K562 (cell line): ENCODE measurements at regions of chr20 and their contacts with region 1.

Region 1: GRCh38 chr20:50165684-50166554 is 12.4 kb upstream of the PEDS1 start:
- DNase-seq: peak; percentile 95 to 99 (median 96)
- ATAC-seq: peak; percentile 97
- H3K4me3 ChIP-seq: peak overlapping the region; percentile 37
- H3K27ac ChIP-seq: peak overlapping the region; percentile 91
- H3K4me1 ChIP-seq: peaks cover 31 to 34% of the 10 kb centered on the region in 2 experiments; a peak in 4 of 5 replicates
- H3K27me3 ChIP-seq: no peaks in the 10 kb centered on the region
- CTCF ChIP-seq: peak in 2 of 3 experiments; percentile 13 to 15; a peak in 1 of 6 replicates
- EP300 ChIP-seq: peak; percentile 95
- POLR2A ChIP-seq: peak; percentile 75
- RAD21 ChIP-seq: 0 out of 4 replicates have a peak, but pooled peaks of 1 of the 2 experiments have one; percentile 3

Region 2: GRCh38 chr20:50070991-50071888 is 94.7 kb before region 1 on chr20:
- CTCF ChIA-PET with region 1: interaction called, 3 read pairs
- POLR2A ChIA-PET with region 1: no interaction called
- in situ Hi-C with region 1: loop called (anchors 5 kb)
- intact Hi-C with region 1: loop called (anchors 2 kb)
- DNase-seq: peak; percentile 92 to 96 (median 94)
- ATAC-seq: peak; percentile 99
- H3K4me3 ChIP-seq: peak overlapping the region; percentile 27
- H3K27ac ChIP-seq: peak overlapping the region; percentile 50; the same call in 2 of the 3 replicates
- H3K4me1 ChIP-seq: peaks cover 2 to 27% of the 10 kb centered on the region in 2 experiments; a peak in 4 of 5 replicates
- H3K27me3 ChIP-seq: no peaks in the 10 kb centered on the region
- CTCF ChIP-seq: peak; percentile 98 to 99 (median 99)
- EP300 ChIP-seq: 0 out of 2 replicates have a peak, but pooled peaks have one; percentile 28
- POLR2A ChIP-seq: 0 out of 2 replicates have a peak, but pooled peaks have one; percentile 38
- RAD21 ChIP-seq: peak; percentile 99 to 100

Region 3: GRCh38 chr20:50085452-50086365 is 80.2 kb before region 1 on chr20:
- CTCF ChIA-PET with region 1: interaction called, 5 read pairs
- POLR2A ChIA-PET with region 1: interaction called, 3 read pairs
- in situ Hi-C with region 1: no loop called
- intact Hi-C with region 1: loop called (anchors 5 kb)
- DNase-seq: peak; percentile 57 to 69 (median 62)
- ATAC-seq: peak; percentile 87
- H3K4me3 ChIP-seq: no peak overlapping the region
- H3K27ac ChIP-seq: peak overlapping the region; percentile 41; the same call in 1 of the 3 replicates
- H3K4me1 ChIP-seq: peaks cover 4 to 20% of the 10 kb centered on the region in 2 experiments
- H3K27me3 ChIP-seq: no peaks in the 10 kb centered on the region
- CTCF ChIP-seq: peak; percentile 78 to 87 (median 85)
- EP300 ChIP-seq: no peak
- POLR2A ChIP-seq: no peak; the same call in 1 of the 2 replicates
- RAD21 ChIP-seq: peak; percentile 59 to 74

Region 4: GRCh38 chr20:50115591-50116372 is 50.1 kb before region 1 on chr20:
- CTCF ChIA-PET with region 1: interaction called, 8 read pairs
- POLR2A ChIA-PET with region 1: interaction called, 6 read pairs
- in situ Hi-C with region 1: no loop called
- intact Hi-C with region 1: loop called (anchors 2 kb)
- DNase-seq: peak; percentile 85 to 97 (median 89)
- ATAC-seq: peak; percentile 83
- H3K4me3 ChIP-seq: peak overlapping the region; percentile 63
- H3K27ac ChIP-seq: peak overlapping the region; percentile 75
- H3K4me1 ChIP-seq: peaks cover 23 to 34% of the 10 kb centered on the region in 2 experiments
- H3K27me3 ChIP-seq: no peaks in the 10 kb centered on the region
- CTCF ChIP-seq: no peak
- EP300 ChIP-seq: no peak; the same call in 1 of the 2 replicates
- POLR2A ChIP-seq: peak; percentile 75
- RAD21 ChIP-seq: no peak

Region 5: GRCh38 chr20:50120897-50121693 is 44.8 kb before region 1 on chr20:
- CTCF ChIA-PET with region 1: interaction called, 8 read pairs
- POLR2A ChIA-PET with region 1: interaction called, 6 read pairs
- in situ Hi-C with region 1: no loop called
- intact Hi-C with region 1: loop called (anchors 2 kb)
- DNase-seq: peak in 1 of 4 experiments; percentile 37
- ATAC-seq: peak; percentile 58
- H3K4me3 ChIP-seq: no peak overlapping the region
- H3K27ac ChIP-seq: no peak overlapping the region
- H3K4me1 ChIP-seq: peaks cover 4 to 7% of the 10 kb centered on the region in 2 experiments; a peak in 3 of 5 replicates
- H3K27me3 ChIP-seq: no peaks in the 10 kb centered on the region
- CTCF ChIP-seq: peak; percentile 62 to 68 (median 66)
- EP300 ChIP-seq: no peak
- POLR2A ChIP-seq: no peak
- RAD21 ChIP-seq: peak; percentile 35 to 69; a peak in 3 of 4 replicates

Region 6: DNA sequence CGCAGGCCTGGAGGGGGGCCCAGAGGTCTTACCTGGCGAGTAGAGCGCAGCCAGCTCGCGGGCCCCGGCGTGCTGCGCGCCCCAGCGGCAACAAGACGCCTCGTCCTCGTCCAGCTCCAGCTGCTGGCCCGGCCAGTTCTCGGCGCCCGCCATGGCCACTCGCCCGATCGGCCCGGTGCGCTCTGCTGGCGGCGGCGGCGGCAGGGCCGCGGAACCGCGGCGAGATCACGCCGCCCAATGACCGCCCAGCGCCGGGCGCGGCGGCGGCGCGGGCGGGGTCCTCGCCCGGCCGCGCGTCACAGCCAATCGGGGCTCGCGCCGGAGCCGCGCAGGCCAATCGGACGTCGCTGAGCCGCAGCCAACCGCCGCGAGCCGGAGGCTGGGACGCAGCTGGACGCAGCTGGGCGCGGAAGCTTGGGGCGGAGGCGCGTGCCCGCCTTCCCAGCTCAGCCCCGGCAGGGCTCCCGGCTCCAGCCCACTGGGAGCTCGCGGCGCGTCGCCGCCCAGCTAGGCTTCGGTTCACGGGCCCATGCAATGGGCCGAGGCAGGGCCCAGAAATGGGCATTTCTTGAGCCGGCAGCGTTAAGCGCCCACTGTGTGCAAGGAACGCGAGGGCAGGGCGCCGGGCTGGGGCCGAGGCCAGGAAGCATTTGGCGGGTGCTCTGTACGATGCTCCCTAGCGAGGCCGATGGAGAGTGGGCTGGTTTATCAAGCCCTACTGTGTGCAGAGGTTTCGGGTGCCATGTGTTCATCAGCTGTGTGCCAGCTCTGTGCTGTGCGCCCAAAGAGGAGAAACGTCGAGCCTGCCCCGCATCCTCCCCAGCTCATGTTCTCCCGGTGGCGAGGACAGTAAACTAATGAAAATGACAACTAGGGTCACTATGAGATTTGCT is 12.2 kb before region 1 on chr20 and contains the start of gene PEDS1:
- CTCF ChIA-PET with region 1: interaction called, 4 read pairs
- POLR2A ChIA-PET with region 1: interaction called, 20 read pairs
- in situ Hi-C with region 1: no loop called
- intact Hi-C with region 1: no loop called
- DNase-seq: peak; percentile 93 to 98 (median 98)
- ATAC-seq: peak; percentile 97
- H3K4me3 ChIP-seq: peak within 1 kb of the TSS; percentile 93
- H3K27ac ChIP-seq: peak within 1 kb of the TSS; percentile 92
- H3K4me1 ChIP-seq: peaks cover 27 to 52% of the 10 kb centered on the region in 2 experiments
- H3K27me3 ChIP-seq: no peaks in the 10 kb centered on the region
- CTCF ChIP-seq: no peak
- EP300 ChIP-seq: no peak
- POLR2A ChIP-seq: peak; percentile 84
- RAD21 ChIP-seq: no peak
- polyA plus RNA-seq, gene PEDS1: 2.9 to 3.9 TPM

Region 7: GRCh38 chr20:50303573-50304501 is 137.9 kb after region 1 on chr20:
- CTCF ChIA-PET with region 1: no interaction called
- POLR2A ChIA-PET with region 1: no interaction called
- in situ Hi-C with region 1: no loop called
- intact Hi-C with region 1: no loop called
- DNase-seq: peak; percentile 48 to 73 (median 56)
- ATAC-seq: peak; percentile 44
- H3K4me3 ChIP-seq: no peak overlapping the region
- H3K27ac ChIP-seq: no peak overlapping the region
- H3K4me1 ChIP-seq: peaks cover 38 to 40% of the 10 kb centered on the region in 2 experiments
- H3K27me3 ChIP-seq: no peaks in the 10 kb centered on the region
- CTCF ChIP-seq: no peak
- EP300 ChIP-seq: no peak
- POLR2A ChIP-seq: no peak
- RAD21 ChIP-seq: no peak